ENCODE measurements at regions of chr5 and their contacts with region 1.

Region 1: DNA sequence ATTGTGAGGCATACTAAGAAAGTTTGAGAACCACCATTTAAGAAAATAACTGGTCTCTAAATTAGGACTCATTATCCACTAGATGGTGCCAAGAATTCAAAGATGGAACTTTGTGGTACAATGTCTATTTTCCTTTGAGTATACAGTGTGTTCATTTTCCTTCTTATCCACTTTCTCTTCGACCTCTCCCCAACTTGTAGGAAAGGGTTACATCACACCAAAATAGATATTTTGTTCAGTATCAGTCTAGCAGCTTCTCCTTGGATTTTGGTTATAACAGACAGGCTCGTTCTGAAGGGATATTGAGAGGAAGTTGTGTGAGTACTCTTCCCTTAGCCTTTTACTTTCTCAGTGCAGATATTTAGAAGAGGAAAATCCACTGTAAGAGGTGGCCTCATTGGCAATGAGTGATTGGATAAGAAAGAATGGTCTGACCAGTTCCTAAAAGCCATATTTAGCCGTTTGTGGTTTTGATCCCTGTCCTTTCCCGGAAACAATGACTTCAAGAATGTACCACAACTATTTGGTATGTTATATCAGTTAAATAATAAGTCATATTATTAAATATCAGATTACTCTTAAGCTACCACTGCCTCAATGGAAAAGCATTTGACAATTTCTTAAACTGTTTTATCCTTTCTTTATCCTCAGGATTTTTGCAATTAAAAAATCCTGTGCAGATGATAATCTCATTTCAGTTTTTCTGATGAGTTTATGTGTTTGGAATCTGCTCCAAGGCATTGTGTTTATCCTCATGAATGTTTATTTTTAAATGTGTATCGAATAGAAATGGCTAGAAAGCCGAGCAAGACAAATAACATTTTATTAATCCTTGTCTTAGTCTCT is 69.0 kb upstream of the GRAMD2B start:
- DNase-seq: peak; percentile 93
- ATAC-seq: peak; percentile 70
- H3K4me3 ChIP-seq: peak overlapping the region; percentile 61
- H3K27ac ChIP-seq: peak overlapping the region; percentile 97
- H3K4me1 ChIP-seq: peaks cover 72% of the 10 kb centered on the region
- H3K27me3 ChIP-seq: no peaks in the 10 kb centered on the region
- CTCF ChIP-seq: peak; percentile 78

Region 2: DNA sequence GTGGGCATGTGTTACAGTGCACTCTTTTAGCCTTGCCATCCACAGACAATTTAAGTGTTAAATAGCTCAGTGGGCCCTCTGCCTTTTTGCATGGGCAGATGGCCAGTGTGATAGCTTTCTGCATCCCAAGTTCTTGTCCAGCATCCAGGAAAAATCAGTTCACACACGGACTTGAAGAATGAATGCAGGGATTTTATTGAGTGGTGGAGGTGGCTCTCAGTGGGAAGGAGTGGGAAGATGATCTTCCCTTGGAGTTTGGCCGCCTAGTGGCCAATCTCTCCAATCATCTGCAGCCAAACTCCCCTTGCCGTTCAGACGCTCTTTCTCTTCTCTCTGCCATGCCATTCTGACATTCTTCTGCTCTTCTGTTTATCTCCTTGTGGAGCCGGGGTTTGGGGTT is 253.5 kb before region 1 on chr5:
- CTCF ChIA-PET with region 1: no interaction called
- POLR2A ChIA-PET with region 1: no interaction called
- intact Hi-C with region 1: no loop called
- DNase-seq: no peak
- ATAC-seq: no peak
- H3K4me3 ChIP-seq: no peak overlapping the region
- H3K27ac ChIP-seq: no peak overlapping the region
- H3K4me1 ChIP-seq: no peaks in the 10 kb centered on the region
- H3K27me3 ChIP-seq: no peaks in the 10 kb centered on the region
- CTCF ChIP-seq: peak; percentile 40; the same call in 1 of the 2 replicates

Region 3: DNA sequence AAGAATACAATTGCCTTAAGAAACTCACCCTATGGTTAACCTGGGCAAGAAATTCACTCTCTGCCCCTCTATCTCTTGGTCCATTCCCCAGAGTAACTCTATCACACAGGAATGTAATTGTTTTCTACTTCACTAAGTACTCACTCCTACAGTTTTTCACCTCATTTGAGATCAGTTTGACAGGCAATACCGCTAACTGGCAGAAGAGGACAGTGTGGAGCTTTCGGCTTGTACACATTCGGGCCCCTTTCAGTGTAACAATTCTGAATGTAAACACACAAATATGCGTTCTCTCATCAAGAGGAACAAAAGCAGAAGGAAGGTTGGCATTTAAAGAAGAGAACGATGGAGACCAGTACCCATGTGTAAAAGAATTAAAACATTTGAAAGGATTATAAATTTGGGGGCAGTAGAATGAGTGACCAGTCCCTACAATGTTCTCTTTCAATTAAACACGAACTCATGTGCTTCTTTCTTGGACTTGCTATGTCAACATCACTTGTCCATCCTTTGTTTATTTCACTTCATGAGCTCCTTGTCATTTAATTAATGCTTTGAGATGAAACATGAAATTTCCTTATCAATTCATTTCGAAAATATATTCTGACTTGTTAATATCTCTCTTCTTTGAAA is 119.6 kb before region 1 on chr5:
- CTCF ChIA-PET with region 1: no interaction called
- POLR2A ChIA-PET with region 1: no interaction called
- intact Hi-C with region 1: no loop called
- DNase-seq: peak; percentile 60
- ATAC-seq: peak; percentile 79
- H3K4me3 ChIP-seq: peak overlapping the region; percentile 32; the same call in 1 of the 2 replicates
- H3K27ac ChIP-seq: no peak overlapping the region
- H3K4me1 ChIP-seq: no peaks in the 10 kb centered on the region; the same call in 1 of the 2 replicates
- H3K27me3 ChIP-seq: no peaks in the 10 kb centered on the region
- CTCF ChIP-seq: peak; percentile 86

Region 4: DNA sequence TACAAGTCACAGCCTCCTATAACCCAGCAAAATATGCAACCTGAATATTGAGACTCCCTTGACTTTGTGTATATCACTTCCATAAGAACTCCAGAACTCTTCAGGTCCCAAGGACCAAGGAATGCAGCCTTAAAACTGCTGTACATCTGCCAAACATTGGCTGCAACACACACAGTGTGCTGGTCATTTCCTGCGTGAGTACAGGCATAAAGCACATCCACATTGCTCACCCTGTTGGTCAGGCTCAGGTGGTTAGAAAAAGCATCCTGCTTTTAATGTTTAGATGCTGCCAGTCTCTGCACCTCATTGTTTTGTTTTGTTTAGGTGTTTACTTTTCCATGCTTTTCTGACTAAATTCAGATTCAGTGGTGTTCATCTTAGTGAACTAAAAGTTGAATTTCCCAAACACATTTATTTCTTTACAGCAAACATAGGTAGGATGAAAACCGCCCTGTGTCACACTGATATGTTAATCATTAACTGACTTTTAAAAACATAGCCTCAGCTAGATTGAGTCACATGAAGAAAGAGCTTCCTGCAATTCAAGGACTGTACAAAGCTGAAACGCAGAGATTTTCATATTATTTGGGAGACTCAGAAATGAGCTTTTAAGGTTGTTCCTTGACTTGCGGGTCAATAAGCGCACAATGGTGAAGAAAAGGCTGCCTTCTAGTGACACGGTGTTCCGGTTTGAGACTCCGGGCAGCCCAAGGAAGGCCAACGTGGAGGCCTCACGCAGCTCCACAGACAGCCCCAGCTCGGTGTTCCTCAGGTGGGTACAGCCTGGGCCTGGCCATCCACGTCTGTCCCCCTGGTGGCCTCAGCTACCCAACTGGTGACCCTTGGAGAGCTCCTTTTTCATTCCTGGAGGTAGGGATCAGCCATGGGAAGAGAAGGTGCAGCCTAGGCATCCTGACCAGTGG is 16.8 kb after region 1 on chr5:
- CTCF ChIA-PET with region 1: interaction called, 3 read pairs
- POLR2A ChIA-PET with region 1: interaction called, 14 read pairs
- intact Hi-C with region 1: loop called (anchors 1 kb)
- DNase-seq: peak; percentile 83
- ATAC-seq: peak; percentile 80
- H3K4me3 ChIP-seq: peak overlapping the region; percentile 65
- H3K27ac ChIP-seq: peak overlapping the region; percentile 88
- H3K4me1 ChIP-seq: peaks cover 60% of the 10 kb centered on the region
- H3K27me3 ChIP-seq: no peaks in the 10 kb centered on the region
- CTCF ChIP-seq: 0 out of 2 replicates have a peak, but pooled peaks have one; percentile 20

Region 5: GRCh38 chr5:126422989-126423788 is 69.0 kb after region 1 on chr5 and contains the start of gene GRAMD2B:
- CTCF ChIA-PET with region 1: no interaction called
- POLR2A ChIA-PET with region 1: interaction called, 6 read pairs
- intact Hi-C with region 1: loop called (anchors 1 kb)
- DNase-seq: peak; percentile 91
- ATAC-seq: peak; percentile 95
- H3K4me3 ChIP-seq: peak within 1 kb of the TSS; percentile 91
- H3K27ac ChIP-seq: peak within 1 kb of the TSS; percentile 76
- H3K4me1 ChIP-seq: peaks cover 25% of the 10 kb centered on the region
- H3K27me3 ChIP-seq: no peaks in the 10 kb centered on the region
- CTCF ChIP-seq: no peak
- total RNA-seq, gene GRAMD2B: 33.6 and 38.8 TPM in 2 replicates

Region 6: GRCh38 chr5:126492936-126493335 is 138.7 kb after region 1 on chr5:
- CTCF ChIA-PET with region 1: no interaction called
- POLR2A ChIA-PET with region 1: no interaction called
- intact Hi-C with region 1: loop called (anchors 1 kb)
- DNase-seq: peak; percentile 38
- ATAC-seq: no peak
- H3K4me3 ChIP-seq: no peak overlapping the region
- H3K27ac ChIP-seq: no peak overlapping the region
- H3K4me1 ChIP-seq: no peaks in the 10 kb centered on the region
- H3K27me3 ChIP-seq: no peaks in the 10 kb centered on the region
- CTCF ChIP-seq: peak; percentile 60

Region 7: DNA sequence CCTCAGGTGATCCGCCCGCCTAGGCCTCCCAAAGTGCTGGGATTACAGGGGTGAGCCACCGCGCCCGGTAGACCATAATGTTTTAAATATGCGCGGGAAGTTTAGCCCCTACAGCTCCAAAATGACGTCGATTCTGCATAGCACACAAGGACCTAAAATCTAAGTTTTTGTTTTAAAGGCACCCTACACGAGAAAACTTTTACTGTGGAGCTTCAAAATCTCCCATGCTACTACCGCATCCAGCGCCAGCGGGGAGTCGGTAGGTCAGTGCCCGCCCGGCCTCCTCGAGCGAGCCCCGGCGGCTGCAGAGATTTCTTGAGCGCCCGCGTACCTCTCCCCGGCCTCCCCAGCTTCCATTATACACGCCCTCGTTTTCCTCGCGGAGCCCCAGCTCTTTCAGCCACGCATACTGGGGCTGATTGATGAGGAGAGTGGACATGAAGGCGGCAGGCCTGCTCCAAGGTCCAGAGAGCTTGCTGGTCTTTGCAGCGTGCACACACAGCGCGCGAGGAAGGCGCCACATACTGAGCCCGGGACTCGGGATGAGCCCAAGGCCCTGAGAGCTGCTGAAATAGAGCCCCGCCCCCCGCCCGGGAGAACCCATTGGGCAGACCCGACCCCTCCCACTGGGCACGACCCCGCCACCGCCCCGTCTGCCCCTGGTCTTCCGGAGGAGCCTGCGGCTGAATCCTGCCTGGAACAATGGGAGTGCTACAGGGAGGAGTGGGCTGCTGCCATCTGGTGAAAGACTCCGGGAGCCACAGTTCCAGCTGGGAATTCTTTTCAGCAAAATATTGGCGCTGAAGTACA is 240.6 kb after region 1 on chr5 and contains the start of gene ALDH7A1:
- CTCF ChIA-PET with region 1: no interaction called
- POLR2A ChIA-PET with region 1: no interaction called
- intact Hi-C with region 1: loop called (anchors 2 kb)
- DNase-seq: peak; percentile 91
- ATAC-seq: peak; percentile 81
- H3K4me3 ChIP-seq: peak within 1 kb of the TSS; percentile 76
- H3K27ac ChIP-seq: peak within 1 kb of the TSS; percentile 49
- H3K4me1 ChIP-seq: peaks cover 18% of the 10 kb centered on the region
- H3K27me3 ChIP-seq: no peaks in the 10 kb centered on the region
- CTCF ChIP-seq: peak; percentile 59
- total RNA-seq, gene ALDH7A1: 45.8 and 45.9 TPM in 2 replicates